CD4-positive, alpha-beta memory T cell (primary cell): ENCODE measurements at regions of chr6 and their contacts with region 1.

Region 1: GRCh38 chr6:73653571-73654424 is at the start of gene SLC17A5:
- DNase-seq: peak; percentile 80 to 91 (median 86)
- H3K4me3 ChIP-seq: peak within 1 kb of the TSS; percentile 85 to 95
- H3K4me3 Mint-ChIP-seq: peak within 1 kb of the TSS; percentile 99 to 100 (median 99)
- H3K27ac ChIP-seq: peak within 1 kb of the TSS; percentile 99
- H3K27ac Mint-ChIP-seq: peak within 1 kb of the TSS; percentile 95 to 99 (median 99)
- H3K4me1 ChIP-seq: peaks cover 22% of the 10 kb centered on the region
- H3K4me1 Mint-ChIP-seq: peaks cover 13 to 40% (median 34%) of the 10 kb centered on the region in 4 donors
- H3K27me3 ChIP-seq: no peaks in the 10 kb centered on the region
- H3K27me3 Mint-ChIP-seq: no peaks in the 10 kb centered on the region
- total RNA-seq, gene SLC17A5: 16.1 to 16.2 TPM

Region 2: DNA sequence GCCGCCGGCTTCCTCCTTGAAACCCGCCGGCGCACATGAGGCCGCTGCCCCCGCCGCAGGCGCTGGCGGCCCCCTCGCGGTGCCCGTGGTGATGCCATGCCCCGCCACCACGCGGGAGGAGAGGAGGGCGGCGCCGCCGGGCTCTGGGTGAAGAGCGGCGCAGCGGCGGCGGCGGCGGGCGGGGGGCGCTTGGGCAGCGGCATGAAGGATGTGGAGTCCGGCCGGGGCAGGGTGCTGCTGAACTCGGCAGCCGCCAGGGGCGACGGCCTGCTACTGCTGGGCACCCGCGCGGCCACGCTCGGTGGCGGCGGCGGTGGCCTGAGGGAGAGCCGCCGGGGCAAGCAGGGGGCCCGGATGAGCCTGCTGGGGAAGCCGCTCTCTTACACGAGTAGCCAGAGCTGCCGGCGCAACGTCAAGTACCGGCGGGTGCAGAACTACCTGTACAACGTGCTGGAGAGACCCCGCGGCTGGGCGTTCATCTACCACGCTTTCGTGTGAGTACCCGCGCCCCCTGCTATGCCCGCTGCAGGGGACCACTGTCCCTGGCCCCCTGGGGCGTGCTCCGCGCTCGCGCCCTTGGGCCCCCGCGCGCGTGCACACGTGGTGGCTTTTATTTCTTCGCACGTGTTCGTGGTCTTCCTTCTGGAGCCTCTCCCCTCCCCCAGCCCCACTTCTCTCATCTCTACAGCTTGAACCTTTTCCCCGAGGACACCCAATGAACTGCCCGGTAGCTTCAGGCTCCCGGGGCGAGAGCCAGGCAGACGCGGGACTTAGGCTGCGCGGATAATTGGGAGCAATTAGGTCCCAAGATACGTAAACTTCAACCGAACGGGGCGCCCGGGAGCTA is 1031.5 kb before region 1 on chr6:
- CTCF ChIA-PET with region 1: no interaction called
- POLR2A ChIA-PET with region 1: no interaction called
- intact Hi-C with region 1: loop called (anchors 10 kb)
- DNase-seq: peak; percentile 33 to 60 (median 43)
- H3K4me3 ChIP-seq: peak overlapping the region; percentile 30 to 65
- H3K4me3 Mint-ChIP-seq: peak overlapping the region; percentile 85 to 96 (median 91)
- H3K27ac ChIP-seq: no peak overlapping the region
- H3K27ac Mint-ChIP-seq: peak overlapping the region in 4 of 7 donors; percentile 55 to 89 (median 66)
- H3K4me1 ChIP-seq: peaks cover 32% of the 10 kb centered on the region
- H3K4me1 Mint-ChIP-seq: peaks cover 21 to 43% (median 30%) of the 10 kb centered on the region in 4 donors
- H3K27me3 ChIP-seq: no peaks in the 10 kb centered on the region
- H3K27me3 Mint-ChIP-seq: no peaks in the 10 kb centered on the region

Region 3: DNA sequence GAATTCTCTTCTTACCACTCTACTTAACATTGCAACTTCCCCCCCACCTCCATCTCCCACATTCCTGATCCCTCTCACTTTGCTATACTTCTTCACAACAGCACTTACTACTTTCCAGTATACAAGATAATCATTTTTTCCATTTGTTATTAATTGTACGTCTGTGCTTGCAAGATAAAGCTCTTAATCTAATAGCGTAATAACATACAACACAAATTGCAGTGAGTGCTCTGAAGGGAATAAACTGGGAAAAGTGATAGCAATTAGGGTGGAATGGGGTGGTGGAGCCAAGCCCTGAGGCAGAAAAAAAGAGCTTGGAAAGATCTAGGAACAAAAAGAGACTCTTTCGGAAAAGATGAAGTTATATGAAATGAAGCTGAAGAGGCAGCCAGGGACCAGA is 210.2 kb before region 1 on chr6:
- CTCF ChIA-PET with region 1: no interaction called
- POLR2A ChIA-PET with region 1: no interaction called
- intact Hi-C with region 1: no loop called
- DNase-seq: no peak
- H3K4me3 ChIP-seq: no peak overlapping the region
- H3K4me3 Mint-ChIP-seq: no peak overlapping the region
- H3K27ac ChIP-seq: no peak overlapping the region
- H3K27ac Mint-ChIP-seq: peak overlapping the region in 3 of 7 donors; percentile 2 to 75 (median 73)
- H3K4me1 ChIP-seq: peaks cover 29% of the 10 kb centered on the region
- H3K4me1 Mint-ChIP-seq: peaks cover 27 to 51% (median 37%) of the 10 kb centered on the region in 4 donors
- H3K27me3 ChIP-seq: no peaks in the 10 kb centered on the region
- H3K27me3 Mint-ChIP-seq: no peaks in the 10 kb centered on the region

Region 4: DNA sequence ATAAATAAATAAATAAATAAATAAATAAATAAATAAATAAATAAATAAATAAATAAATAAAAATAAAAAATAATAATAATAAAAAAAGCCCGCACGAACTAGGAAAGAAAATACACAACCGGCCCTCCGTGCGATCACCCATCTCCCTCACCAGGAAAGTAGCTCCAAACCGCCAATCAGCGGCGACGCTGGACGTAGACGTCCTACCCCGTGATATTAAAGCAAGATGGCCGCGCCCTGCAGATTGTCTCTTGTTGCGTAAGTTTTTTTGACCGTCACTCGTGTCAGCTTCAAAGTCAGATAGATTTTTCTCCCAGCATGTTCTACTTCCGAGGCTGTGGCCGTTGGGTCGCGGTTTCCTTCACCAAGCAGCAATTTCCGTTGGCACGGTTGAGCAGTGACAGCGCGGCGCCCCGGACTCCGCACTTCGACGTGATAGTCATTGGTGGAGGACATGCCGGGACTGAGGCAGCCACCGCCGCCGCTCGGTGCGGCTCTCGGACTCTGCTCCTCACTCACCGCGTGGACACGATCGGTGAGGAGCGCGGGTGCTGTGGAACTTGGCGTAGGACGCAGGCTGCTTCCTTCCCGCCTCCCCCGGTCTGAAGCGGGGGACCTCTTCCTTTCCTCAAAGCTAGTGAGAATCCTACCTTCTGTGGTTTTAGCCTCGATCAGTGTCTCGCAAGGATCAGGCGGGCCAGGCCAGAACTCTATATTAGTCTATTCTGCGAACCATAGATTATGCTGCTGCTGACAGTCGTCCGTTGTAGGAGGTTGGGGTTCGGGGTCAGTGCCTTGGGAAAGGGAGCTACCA is 192.1 kb before region 1 on chr6 and contains the start of gene MTO1:
- CTCF ChIA-PET with region 1: interaction called, 21 read pairs
- POLR2A ChIA-PET with region 1: interaction called, 29 read pairs
- intact Hi-C with region 1: loop called (anchors 2 kb)
- DNase-seq: peak; percentile 83 to 93 (median 84)
- H3K4me3 ChIP-seq: peak within 1 kb of the TSS; percentile 89 to 100
- H3K4me3 Mint-ChIP-seq: peak within 1 kb of the TSS; percentile 95 to 99 (median 97)
- H3K27ac ChIP-seq: peak within 1 kb of the TSS; percentile 91
- H3K27ac Mint-ChIP-seq: peak within 1 kb of the TSS; percentile 95 to 100 (median 98)
- H3K4me1 ChIP-seq: peaks cover 46% of the 10 kb centered on the region
- H3K4me1 Mint-ChIP-seq: peaks cover 25 to 64% (median 44%) of the 10 kb centered on the region in 4 donors
- H3K27me3 ChIP-seq: no peaks in the 10 kb centered on the region
- H3K27me3 Mint-ChIP-seq: no peaks in the 10 kb centered on the region
- total RNA-seq, gene MTO1: 98.9 to 99.8 TPM

Region 5: GRCh38 chr6:73580247-73581149 is 73.3 kb before region 1 on chr6:
- CTCF ChIA-PET with region 1: interaction called, 10 read pairs
- POLR2A ChIA-PET with region 1: interaction called, 24 read pairs
- intact Hi-C with region 1: loop called (anchors 5 kb)
- DNase-seq: peak; percentile 43 to 81 (median 47)
- H3K4me3 ChIP-seq: peak overlapping the region in 1 of 2 donors; percentile 12
- H3K4me3 Mint-ChIP-seq: peak overlapping the region; percentile 70 to 90 (median 84)
- H3K27ac ChIP-seq: peak overlapping the region; percentile 54
- H3K27ac Mint-ChIP-seq: peak overlapping the region; percentile 92 to 98 (median 97)
- H3K4me1 ChIP-seq: peaks cover 29% of the 10 kb centered on the region
- H3K4me1 Mint-ChIP-seq: peaks cover 11 to 33% (median 20%) of the 10 kb centered on the region in 4 donors
- H3K27me3 ChIP-seq: no peaks in the 10 kb centered on the region
- H3K27me3 Mint-ChIP-seq: no peaks in the 10 kb centered on the region

Region 6: GRCh38 chr6:73675466-73676098 is 21.8 kb after region 1 on chr6:
- CTCF ChIA-PET with region 1: interaction called, 13 read pairs
- POLR2A ChIA-PET with region 1: no interaction called
- intact Hi-C with region 1: loop called (anchors 1 kb)
- DNase-seq: peak; percentile 52 to 66 (median 53)
- H3K4me3 ChIP-seq: no peak overlapping the region
- H3K4me3 Mint-ChIP-seq: no peak overlapping the region
- H3K27ac ChIP-seq: no peak overlapping the region
- H3K27ac Mint-ChIP-seq: peak overlapping the region in 1 of 7 donors; percentile 45
- H3K4me1 ChIP-seq: no peaks in the 10 kb centered on the region
- H3K4me1 Mint-ChIP-seq: peaks cover 0 to 3% (median 2%) of the 10 kb centered on the region in 4 donors
- H3K27me3 ChIP-seq: no peaks in the 10 kb centered on the region
- H3K27me3 Mint-ChIP-seq: peaks cover 13 to 16% of the 10 kb centered on the region in 2 donors

Region 7: GRCh38 chr6:74447013-74447412 is 793.2 kb after region 1 on chr6:
- CTCF ChIA-PET with region 1: no interaction called
- POLR2A ChIA-PET with region 1: no interaction called
- intact Hi-C with region 1: no loop called
- DNase-seq: no peak
- H3K4me3 ChIP-seq: no peak overlapping the region
- H3K4me3 Mint-ChIP-seq: no peak overlapping the region
- H3K27ac ChIP-seq: no peak overlapping the region
- H3K27ac Mint-ChIP-seq: no peak overlapping the region
- H3K4me1 ChIP-seq: no peaks in the 10 kb centered on the region
- H3K4me1 Mint-ChIP-seq: no peaks in the 10 kb centered on the region
- H3K27me3 ChIP-seq: no peaks in the 10 kb centered on the region
- H3K27me3 Mint-ChIP-seq: no peaks in the 10 kb centered on the region

Region 8: GRCh38 chr6:75601304-75602245 is 1947.8 kb after region 1 on chr6 and contains the start of gene SENP6:
- CTCF ChIA-PET with region 1: interaction called, 3 read pairs
- POLR2A ChIA-PET with region 1: interaction called, 5 read pairs
- intact Hi-C with region 1: loop called (anchors 5 kb)
- DNase-seq: peak; percentile 78 to 84 (median 81)
- H3K4me3 ChIP-seq: peak within 1 kb of the TSS; percentile 55 to 83
- H3K4me3 Mint-ChIP-seq: peak within 1 kb of the TSS; percentile 95 to 100 (median 98)
- H3K27ac ChIP-seq: peak within 1 kb of the TSS; percentile 96
- H3K27ac Mint-ChIP-seq: peak within 1 kb of the TSS; percentile 97 to 100 (median 98)
- H3K4me1 ChIP-seq: peaks cover 52% of the 10 kb centered on the region
- H3K4me1 Mint-ChIP-seq: peaks cover 43 to 75% (median 60%) of the 10 kb centered on the region in 4 donors
- H3K27me3 ChIP-seq: no peaks in the 10 kb centered on the region
- H3K27me3 Mint-ChIP-seq: no peaks in the 10 kb centered on the region
- total RNA-seq, gene SENP6: 131 to 134 TPM